Prostate gland (tissue), 2 donors: ENCODE measurements at regions of chr1 and their contacts with region 1.

Region 1: DNA sequence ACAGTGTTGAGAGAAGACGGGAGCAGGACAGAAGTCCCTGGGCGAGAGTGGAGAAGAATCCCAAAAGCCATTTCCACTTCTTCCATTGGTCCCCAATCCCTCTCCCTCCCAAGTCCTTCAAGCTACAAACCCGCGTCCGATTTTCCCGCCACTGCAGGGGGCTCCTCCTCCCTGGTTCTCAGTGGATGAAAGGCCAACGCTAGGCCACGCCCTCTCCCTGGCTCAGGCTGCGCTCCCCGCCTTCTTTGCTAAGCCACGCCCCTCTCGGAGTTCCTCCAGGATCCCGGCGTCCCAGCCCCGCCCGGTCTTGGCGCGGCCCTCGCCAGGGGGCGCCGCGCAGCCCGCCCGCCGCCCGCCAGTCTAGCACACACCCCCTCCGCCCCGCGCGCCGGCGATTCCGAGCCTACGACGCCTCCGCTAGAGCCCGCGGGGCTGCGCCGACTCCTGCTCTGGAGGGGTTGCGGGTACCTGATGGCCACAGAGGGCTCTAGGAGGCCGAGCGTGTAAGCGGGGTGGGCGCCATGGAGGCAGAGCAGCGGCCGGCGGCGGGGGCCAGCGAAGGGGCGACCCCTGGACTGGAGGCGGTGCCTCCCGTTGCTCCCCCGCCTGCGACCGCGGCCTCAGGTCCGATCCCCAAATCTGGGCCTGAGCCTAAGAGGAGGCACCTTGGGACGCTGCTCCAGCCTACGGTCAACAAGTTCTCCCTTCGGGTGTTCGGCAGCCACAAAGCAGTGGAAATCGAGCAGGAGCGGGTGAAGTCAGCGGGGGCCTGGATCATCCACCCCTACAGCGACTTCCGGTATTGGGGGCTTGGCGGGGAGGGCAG is at the start of gene HCN3:
- DNase-seq: peak; percentile 97
- H3K4me3 ChIP-seq: peak within 1 kb of the TSS; percentile 56 to 64
- H3K27ac ChIP-seq: peak within 1 kb of the TSS; percentile 76 to 83
- H3K4me1 ChIP-seq: peaks cover 4% of the 10 kb centered on the region
- H3K27me3 ChIP-seq: no peaks in the 10 kb centered on the region
- CTCF ChIP-seq: peak; percentile 74 to 85 (median 78)
- POLR2A ChIP-seq: no peak
- total RNA-seq, gene HCN3: 1.9 to 2.6 TPM

Region 2: GRCh38 chr1:155360051-155360450 is 82.8 kb after region 1 on chr1:
- intact Hi-C with region 1: no loop called
- DNase-seq: no peak
- H3K4me3 ChIP-seq: no peak overlapping the region
- H3K27ac ChIP-seq: no peak overlapping the region
- H3K4me1 ChIP-seq: no peaks in the 10 kb centered on the region
- H3K27me3 ChIP-seq: no peaks in the 10 kb centered on the region
- CTCF ChIP-seq: no peak
- POLR2A ChIP-seq: no peak

Region 3: GRCh38 chr1:155504207-155504606 is 226.9 kb after region 1 on chr1:
- intact Hi-C with region 1: loop called (anchors 10 kb)
- DNase-seq: no peak
- H3K4me3 ChIP-seq: no peak overlapping the region
- H3K27ac ChIP-seq: no peak overlapping the region
- H3K4me1 ChIP-seq: no peaks in the 10 kb centered on the region
- H3K27me3 ChIP-seq: no peaks in the 10 kb centered on the region
- CTCF ChIP-seq: peak in 2 of 4 experiments; percentile 49 to 53
- POLR2A ChIP-seq: no peak

Region 4: GRCh38 chr1:155562581-155563376 is 285.5 kb after region 1 on chr1 and contains the start of gene ASH1L:
- intact Hi-C with region 1: loop called (anchors 10 kb)
- DNase-seq: peak; percentile 91
- H3K4me3 ChIP-seq: peak within 1 kb of the TSS; percentile 68 to 92
- H3K27ac ChIP-seq: peak within 1 kb of the TSS; percentile 92 to 98
- H3K4me1 ChIP-seq: no peaks in the 10 kb centered on the region
- H3K27me3 ChIP-seq: no peaks in the 10 kb centered on the region
- CTCF ChIP-seq: peak in 2 of 4 experiments; percentile 37 to 43
- POLR2A ChIP-seq: peak; percentile 83
- total RNA-seq, gene ASH1L: 53.1 to 66.2 TPM

Region 5: DNA sequence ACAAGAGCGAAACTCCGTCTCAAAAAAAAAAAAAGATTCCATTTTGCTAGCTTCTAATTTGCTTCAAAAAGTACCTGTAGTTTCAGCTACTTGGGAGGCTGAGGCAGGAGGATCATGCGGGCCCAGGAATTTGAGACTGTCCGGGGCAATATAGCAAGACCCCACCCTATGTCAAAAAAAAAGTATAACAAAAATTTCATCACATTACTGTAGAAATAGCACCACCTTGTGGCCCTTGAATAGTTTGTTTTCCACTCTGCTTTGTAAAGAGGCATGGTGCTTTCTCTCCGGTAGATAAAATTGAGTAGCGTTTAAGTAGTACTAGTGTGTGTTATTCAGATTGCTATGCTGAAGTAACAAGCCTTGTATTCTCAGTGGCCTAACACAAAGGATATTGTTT is 314.5 kb after region 1 on chr1:
- intact Hi-C with region 1: loop called (anchors 5 kb)
- DNase-seq: peak; percentile 38
- H3K4me3 ChIP-seq: no peak overlapping the region
- H3K27ac ChIP-seq: no peak overlapping the region
- H3K4me1 ChIP-seq: no peaks in the 10 kb centered on the region
- H3K27me3 ChIP-seq: no peaks in the 10 kb centered on the region
- CTCF ChIP-seq: peak; percentile 25 to 68 (median 58)
- POLR2A ChIP-seq: no peak